ENCODE measurements at regions of chrX and their contacts with region 1.

Region 1: GRCh38 chrX:101986586-101986985 is 54.8 kb upstream of the ZMAT1 start:
- DNase-seq: no peak
- H3K4me3 ChIP-seq: no peak overlapping the region
- CTCF ChIP-seq: no peak

Region 2: DNA sequence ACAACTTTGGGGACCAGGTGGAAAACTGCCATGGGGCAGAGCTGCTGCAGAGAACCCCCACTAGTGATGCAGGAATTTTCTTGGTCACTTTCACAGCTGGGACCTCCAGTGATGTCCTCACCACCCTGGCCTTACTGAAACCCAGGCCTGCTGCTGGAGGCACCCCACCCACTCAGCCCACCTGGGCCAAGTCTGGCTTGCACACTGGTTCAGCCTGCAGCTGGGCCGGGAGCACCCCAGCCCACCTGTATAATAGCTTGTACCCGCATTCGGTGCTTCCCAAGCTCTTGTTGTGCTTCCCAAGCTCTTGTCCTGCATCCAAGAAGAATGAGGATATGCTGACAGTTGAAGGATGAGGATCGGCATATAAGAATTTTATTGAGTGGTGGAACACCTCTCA is 31.6 kb after region 1 on chrX:
- in situ Hi-C with region 1: loop called (anchors 5 kb)
- DNase-seq: no peak
- H3K4me3 ChIP-seq: no peak overlapping the region
- CTCF ChIP-seq: no peak

Region 3: DNA sequence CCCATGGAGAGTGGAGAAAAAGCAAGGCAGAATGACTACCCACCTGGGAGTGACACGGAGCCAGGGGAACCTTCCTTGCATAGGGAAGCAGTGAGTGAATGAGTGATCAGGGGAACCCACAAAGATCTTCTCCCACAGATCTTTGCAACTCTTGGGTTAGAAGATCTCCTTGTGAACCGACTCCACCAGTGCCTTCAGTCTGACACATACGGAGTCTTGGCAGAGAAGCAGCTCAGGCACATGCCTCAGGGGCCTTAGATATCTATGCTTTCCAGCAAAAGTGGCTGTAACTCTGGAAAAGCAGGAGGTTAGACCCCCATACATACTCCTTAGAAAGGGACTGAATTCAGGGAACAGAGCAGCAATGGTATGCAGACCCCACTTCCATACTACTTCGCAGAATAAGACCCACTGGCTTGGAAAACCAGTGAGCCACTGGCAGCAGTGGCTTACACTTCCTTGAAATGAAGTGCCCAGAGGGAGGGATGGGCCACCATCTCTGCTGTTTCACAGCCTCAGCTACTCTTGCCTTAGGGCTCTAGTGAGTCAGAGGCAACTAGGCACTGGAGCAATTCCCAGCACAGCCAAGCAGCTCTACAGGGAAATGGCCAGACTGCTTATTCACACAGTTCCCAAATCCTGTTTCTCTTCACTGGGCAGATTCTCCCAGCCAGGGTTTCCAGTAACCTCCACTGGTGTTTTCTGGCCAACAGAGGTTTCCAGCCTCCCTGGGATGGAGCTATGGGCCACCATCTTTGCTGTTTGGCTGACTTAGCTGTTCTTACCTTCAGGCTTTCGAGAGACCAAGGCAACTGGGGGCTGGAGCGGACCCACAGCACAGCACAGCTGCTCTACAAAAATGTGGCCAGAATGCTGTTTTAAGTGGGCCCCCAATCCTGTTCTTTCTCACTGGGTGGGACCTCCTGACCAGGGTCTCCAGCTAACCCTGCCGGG is 56.1 kb after region 1 on chrX:
- in situ Hi-C with region 1: no loop called
- DNase-seq: no peak
- H3K4me3 ChIP-seq: no peak overlapping the region
- CTCF ChIP-seq: no peak

Measured in astrocyte of the cerebellum (primary cell).